ENCODE measurements at regions of chr16 and their contacts with region 1.

Region 1: DNA sequence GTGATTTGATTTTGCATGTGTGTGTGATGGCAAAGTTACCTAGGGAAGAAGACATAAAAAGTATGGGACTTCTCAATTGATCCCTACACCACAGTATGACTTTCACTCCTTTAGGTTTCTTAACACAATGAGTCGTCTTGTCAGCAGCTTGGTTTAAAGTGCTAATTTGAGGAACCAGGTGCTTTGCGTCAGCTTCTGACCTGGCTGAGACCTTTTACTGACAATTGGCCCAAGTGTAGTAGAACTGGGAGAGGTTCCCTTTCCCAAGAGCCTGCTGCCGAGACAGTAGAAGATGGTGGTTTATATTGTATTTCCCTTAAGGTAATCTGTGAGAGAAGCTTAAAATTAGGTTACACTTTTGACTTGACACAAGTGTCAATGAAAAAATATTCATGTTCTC is 54.9 kb downstream of the LDHD start:
- DNase-seq: peak; percentile 74
- H3K4me3 ChIP-seq: peak overlapping the region in 1 of 4 donors; percentile 3
- H3K27ac ChIP-seq: peak overlapping the region; percentile 67 to 86 (median 84)
- H3K4me1 ChIP-seq: peaks cover 0 to 94% (median 64%) of the 10 kb centered on the region in 4 donors
- H3K27me3 ChIP-seq: no peaks in the 10 kb centered on the region
- CTCF ChIP-seq: no peak
- EP300 ChIP-seq: no peak
- POLR2A ChIP-seq: no peak

Region 2: DNA sequence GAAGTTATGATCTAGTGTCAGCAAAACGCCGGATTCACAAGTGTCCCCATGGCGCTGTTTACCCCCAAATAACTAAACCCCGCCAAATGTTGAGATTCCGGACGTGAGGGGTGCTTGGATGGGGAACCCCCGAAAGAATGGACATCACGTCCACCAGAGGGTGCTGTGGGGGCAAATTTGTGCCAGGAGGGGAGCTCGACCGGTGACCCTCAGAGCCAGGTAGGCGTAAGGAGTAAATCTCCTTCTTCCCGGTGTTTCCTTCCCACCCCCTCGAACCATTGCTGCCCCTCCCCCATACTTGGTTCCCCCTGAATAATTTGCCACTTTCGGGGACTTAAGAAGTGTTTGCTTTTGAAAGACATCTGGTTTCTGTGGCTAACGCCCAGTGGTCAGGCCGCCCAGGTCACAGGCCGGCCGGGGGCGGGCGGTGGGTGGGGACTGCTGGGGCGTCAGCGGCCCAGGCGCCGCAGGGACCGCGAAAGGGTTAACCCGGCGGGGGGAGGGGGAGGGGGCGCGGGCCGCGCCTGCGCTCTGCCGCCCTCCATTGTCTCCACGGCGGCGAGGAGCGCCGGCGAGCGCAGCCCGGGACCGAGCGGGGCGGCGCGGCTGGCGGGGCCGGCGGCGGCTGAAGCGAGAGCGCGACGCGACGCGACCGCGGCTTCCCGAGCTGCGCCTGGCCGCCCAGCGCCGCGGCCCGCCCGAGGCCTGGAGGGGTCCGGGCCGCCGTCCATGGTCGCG is 63.0 kb before region 1 on chr16 and contains the start of gene ZNRF1:
- intact Hi-C with region 1: loop called (anchors 5 kb)
- DNase-seq: peak; percentile 92
- H3K4me3 ChIP-seq: peak within 1 kb of the TSS; percentile 84 to 99 (median 93)
- H3K27ac ChIP-seq: peak within 1 kb of the TSS; percentile 84 to 93 (median 92)
- H3K4me1 ChIP-seq: peaks cover 0 to 43% (median 21%) of the 10 kb centered on the region in 4 donors
- H3K27me3 ChIP-seq: no peaks in the 10 kb centered on the region
- CTCF ChIP-seq: peak; percentile 77 to 93 (median 86)
- EP300 ChIP-seq: no peak
- POLR2A ChIP-seq: no peak
- total RNA-seq, gene ZNRF1: 16.9 to 33.0 (median 22.3) TPM

Region 3: GRCh38 chr16:75011634-75012307 is 49.9 kb before region 1 on chr16:
- intact Hi-C with region 1: no loop called
- DNase-seq: no peak
- H3K4me3 ChIP-seq: no peak overlapping the region
- H3K27ac ChIP-seq: peak overlapping the region; percentile 69 to 83 (median 82)
- H3K4me1 ChIP-seq: peaks cover 0 to 58% (median 45%) of the 10 kb centered on the region in 4 donors
- H3K27me3 ChIP-seq: no peaks in the 10 kb centered on the region
- CTCF ChIP-seq: no peak
- EP300 ChIP-seq: no peak
- POLR2A ChIP-seq: no peak

Region 4: GRCh38 chr16:75105306-75106061 is 43.8 kb after region 1 on chr16:
- intact Hi-C with region 1: loop called (anchors 2 kb)
- DNase-seq: peak; percentile 97
- H3K4me3 ChIP-seq: no peak overlapping the region
- H3K27ac ChIP-seq: peak overlapping the region; percentile 77 to 92 (median 88)
- H3K4me1 ChIP-seq: peaks cover 0 to 86% (median 70%) of the 10 kb centered on the region in 4 donors
- H3K27me3 ChIP-seq: no peaks in the 10 kb centered on the region
- CTCF ChIP-seq: no peak
- EP300 ChIP-seq: peak in 3 of 4 donors; percentile 65 to 82 (median 77)
- POLR2A ChIP-seq: no peak

Region 5: DNA sequence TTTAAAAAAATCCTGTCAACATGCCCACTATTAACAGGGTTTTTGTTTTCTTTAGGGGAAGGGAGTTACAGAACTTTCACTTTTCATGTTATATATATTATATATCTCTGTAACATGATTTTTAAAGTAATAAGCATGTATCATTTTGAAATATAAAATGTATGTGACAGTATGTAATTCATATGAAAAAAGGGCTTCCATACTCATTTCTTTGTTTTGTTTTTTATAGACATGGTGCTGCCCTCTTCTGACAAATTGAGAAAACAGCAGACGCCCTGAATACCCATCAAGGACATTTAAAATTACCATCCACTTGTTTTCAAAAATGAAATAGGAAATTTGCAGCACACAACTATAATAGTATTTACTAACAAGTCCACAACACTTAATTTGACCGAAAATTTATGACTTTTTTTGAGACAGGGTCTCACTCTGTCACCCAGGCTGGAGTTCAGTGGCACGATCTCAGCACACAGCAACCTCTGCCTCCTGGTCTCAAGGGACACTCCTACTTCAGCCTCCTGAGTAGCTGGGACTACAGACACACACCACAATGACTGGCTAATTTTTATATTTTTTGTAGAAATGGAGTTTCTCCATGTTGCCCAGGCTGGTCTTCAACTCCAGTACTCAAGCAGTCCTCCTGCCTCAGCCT is 341.3 kb after region 1 on chr16:
- intact Hi-C with region 1: no loop called
- DNase-seq: no peak
- H3K4me3 ChIP-seq: no peak overlapping the region
- H3K27ac ChIP-seq: peak overlapping the region; percentile 8 to 75 (median 37)
- H3K4me1 ChIP-seq: peaks cover 0 to 12% (median 10%) of the 10 kb centered on the region in 4 donors
- H3K27me3 ChIP-seq: no peaks in the 10 kb centered on the region
- CTCF ChIP-seq: peak in 3 of 4 experiments; percentile 59 to 79 (median 68)
- EP300 ChIP-seq: no peak
- POLR2A ChIP-seq: no peak

Measured in sigmoid colon (tissue), 7 donors.